ENCODE measurements at regions of chr10 and their contacts with region 1.

Region 1: DNA sequence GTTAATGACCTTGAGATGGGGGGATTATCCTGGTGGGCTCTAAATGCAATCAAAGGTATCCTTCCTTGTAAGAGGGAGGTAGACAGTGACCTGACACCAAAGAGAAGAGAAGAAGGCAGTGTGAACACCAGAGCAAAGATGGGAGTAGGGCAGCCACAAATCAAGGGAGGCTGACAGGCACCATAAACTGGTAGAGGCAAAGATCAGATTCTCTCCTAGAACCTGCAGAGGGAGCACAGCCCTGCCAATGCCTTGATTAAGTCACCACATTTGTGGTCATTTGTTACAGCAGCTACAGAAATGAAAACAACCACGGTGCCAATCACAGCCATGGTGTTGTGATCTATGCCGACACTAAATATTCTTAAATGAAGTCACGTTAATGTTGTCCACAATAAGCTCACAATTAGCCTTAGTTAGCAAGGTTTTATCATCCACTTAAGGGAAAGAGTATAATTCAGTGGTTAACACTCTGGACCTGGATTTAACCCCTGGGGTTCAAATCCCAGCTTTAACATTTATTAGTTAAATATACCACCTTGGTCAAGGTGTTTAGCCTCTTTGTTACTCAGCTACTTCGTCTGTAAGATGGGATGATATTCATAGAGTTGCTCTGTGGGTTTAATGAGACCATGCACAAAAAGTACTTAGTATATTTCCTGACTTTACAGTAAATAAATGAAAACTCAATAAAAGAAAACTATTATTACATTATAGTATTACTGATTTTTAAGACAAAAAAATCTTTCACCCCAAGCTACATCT is 70.8 kb downstream of the SGMS1 start:
- DNase-seq: no peak

Region 2: GRCh38 chr10:50325449-50326171 is 227.3 kb before region 1 on chr10:
- intact Hi-C with region 1: loop called (anchors 5 kb)
- DNase-seq: no peak

Region 3: DNA sequence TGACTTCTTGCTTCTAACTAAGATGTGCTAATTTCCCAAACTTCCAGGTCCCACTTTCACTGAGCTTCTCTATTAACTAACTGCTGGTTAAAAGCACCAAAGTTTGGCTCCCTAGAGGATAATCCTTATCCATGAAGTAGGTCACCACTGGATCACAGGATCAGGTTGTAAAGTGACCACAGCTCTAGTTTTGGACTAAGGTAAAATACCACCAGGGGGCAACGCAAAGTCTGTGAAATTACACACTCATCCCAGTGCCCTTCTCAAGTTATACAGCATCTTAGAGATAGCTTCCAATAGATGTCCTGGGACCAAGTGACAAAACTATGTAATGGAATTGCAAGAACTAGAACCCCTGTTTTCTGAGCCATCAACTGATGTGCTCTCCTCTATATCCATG is 185.2 kb before region 1 on chr10:
- intact Hi-C with region 1: no loop called
- DNase-seq: no peak

Region 4: GRCh38 chr10:50417886-50418830 is 134.8 kb before region 1 on chr10:
- intact Hi-C with region 1: loop called (anchors 10 kb)
- DNase-seq: peak; percentile 87

Region 5: GRCh38 chr10:50497757-50498156 is 55.2 kb before region 1 on chr10:
- intact Hi-C with region 1: loop called (anchors 10 kb)
- DNase-seq: no peak